ENCODE measurements at regions of chr22 and their contacts with region 1.

Region 1: DNA sequence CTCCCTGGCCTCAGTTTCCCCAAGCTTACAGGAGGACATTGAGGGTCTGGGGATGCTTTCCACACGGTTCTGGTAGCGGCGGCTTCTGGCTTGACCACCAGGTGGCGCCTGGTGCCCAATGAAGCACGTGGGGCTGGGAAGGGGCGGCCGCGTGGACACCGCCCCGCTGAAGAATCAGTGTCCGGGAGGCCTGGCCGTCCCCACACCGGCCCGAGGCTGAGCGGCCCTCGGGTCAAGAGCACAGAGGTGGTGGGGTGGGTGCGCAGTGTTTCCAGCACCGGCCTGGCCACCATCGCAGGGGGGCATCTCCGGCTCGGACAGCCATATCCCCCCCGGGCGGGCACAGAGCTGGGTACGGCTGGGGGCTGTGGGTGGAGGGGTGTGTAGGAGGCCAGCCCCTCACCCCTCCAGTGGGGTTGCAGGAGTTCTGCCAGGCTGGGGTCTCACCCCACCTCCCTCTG is 27.8 kb upstream of the PPARA start:
- DNase-seq: peak; percentile 88
- ATAC-seq: peak; percentile 71
- H3K4me3 ChIP-seq: no peak overlapping the region
- H3K27ac ChIP-seq: no peak overlapping the region
- H3K4me1 ChIP-seq: peaks cover 9% of the 10 kb centered on the region
- H3K27me3 ChIP-seq: no peaks in the 10 kb centered on the region
- CTCF ChIP-seq: peak; percentile 94

Region 2: DNA sequence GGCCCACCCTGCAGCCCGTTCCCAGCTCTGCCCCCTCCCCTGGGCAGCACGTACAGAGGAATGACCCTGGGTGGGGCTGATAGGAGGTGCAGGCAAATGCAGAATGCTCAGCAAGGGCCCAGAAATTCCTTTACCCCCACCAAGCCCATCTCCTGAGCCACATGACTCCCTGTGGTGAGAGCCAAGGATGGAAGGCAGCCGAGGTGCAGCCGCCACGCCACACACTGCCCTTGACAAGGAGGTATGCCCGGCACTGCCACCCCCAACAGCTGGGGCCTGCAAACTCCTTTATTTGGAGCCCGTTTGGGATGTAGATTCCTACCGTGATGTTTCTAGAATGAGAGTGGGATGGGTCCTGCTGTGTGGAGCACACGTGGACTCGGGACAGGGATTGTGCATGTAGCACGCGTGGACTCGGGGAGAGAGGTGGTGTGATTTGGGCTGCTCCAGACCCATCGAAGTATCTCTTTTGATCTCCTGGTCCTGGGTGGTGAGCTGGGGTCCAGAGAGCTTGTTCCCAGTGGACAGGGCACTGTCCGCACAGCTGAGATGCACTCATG is 187.1 kb after region 1 on chr22:
- intact Hi-C with region 1: loop called (anchors 10 kb)
- DNase-seq: no peak
- ATAC-seq: no peak
- H3K4me3 ChIP-seq: no peak overlapping the region
- H3K27ac ChIP-seq: no peak overlapping the region
- H3K4me1 ChIP-seq: no peaks in the 10 kb centered on the region
- H3K27me3 ChIP-seq: no peaks in the 10 kb centered on the region
- CTCF ChIP-seq: no peak

Region 3: GRCh38 chr22:46542011-46542985 is 419.8 kb after region 1 on chr22:
- intact Hi-C with region 1: loop called (anchors 10 kb)
- DNase-seq: peak; percentile 90
- ATAC-seq: peak; percentile 82
- H3K4me3 ChIP-seq: no peak overlapping the region
- H3K27ac ChIP-seq: no peak overlapping the region
- H3K4me1 ChIP-seq: peaks cover 43% of the 10 kb centered on the region
- H3K27me3 ChIP-seq: peaks cover 19% of the 10 kb centered on the region
- CTCF ChIP-seq: peak; percentile 92

Measured in upper lobe of right lung (tissue), 1 donor.